ENCODE measurements at regions of chr3 and their contacts with region 1.

Region 1: GRCh38 chr3:152458376-152459117 is 189.8 kb downstream of the MBNL1 start:
- DNase-seq: no peak
- H3K4me3 Mint-ChIP-seq: peak overlapping the region; percentile 26
- H3K27ac Mint-ChIP-seq: peak overlapping the region; percentile 39
- H3K4me1 Mint-ChIP-seq: peaks cover 31% of the 10 kb centered on the region
- H3K27me3 Mint-ChIP-seq: no peaks in the 10 kb centered on the region

Region 2: GRCh38 chr3:152084441-152085158 is 373.9 kb before region 1 on chr3:
- intact Hi-C with region 1: loop called (anchors 5 kb)
- DNase-seq: no peak
- H3K4me3 Mint-ChIP-seq: no peak overlapping the region
- H3K27ac Mint-ChIP-seq: no peak overlapping the region
- H3K4me1 Mint-ChIP-seq: no peaks in the 10 kb centered on the region
- H3K27me3 Mint-ChIP-seq: peaks cover 5% of the 10 kb centered on the region

Region 3: GRCh38 chr3:152356870-152357276 is 101.7 kb before region 1 on chr3:
- intact Hi-C with region 1: no loop called
- DNase-seq: no peak
- H3K4me3 Mint-ChIP-seq: no peak overlapping the region
- H3K27ac Mint-ChIP-seq: peak overlapping the region; percentile 15
- H3K4me1 Mint-ChIP-seq: peaks cover 56% of the 10 kb centered on the region
- H3K27me3 Mint-ChIP-seq: no peaks in the 10 kb centered on the region

Region 4: GRCh38 chr3:152444029-152444641 is 14.4 kb before region 1 on chr3:
- intact Hi-C with region 1: no loop called
- DNase-seq: no peak
- H3K4me3 Mint-ChIP-seq: no peak overlapping the region
- H3K27ac Mint-ChIP-seq: peak overlapping the region; percentile 14
- H3K4me1 Mint-ChIP-seq: peaks cover 51% of the 10 kb centered on the region
- H3K27me3 Mint-ChIP-seq: no peaks in the 10 kb centered on the region

Region 5: GRCh38 chr3:153257673-153258351 is 799.3 kb after region 1 on chr3:
- intact Hi-C with region 1: no loop called
- DNase-seq: no peak
- H3K4me3 Mint-ChIP-seq: no peak overlapping the region
- H3K27ac Mint-ChIP-seq: no peak overlapping the region
- H3K4me1 Mint-ChIP-seq: peaks cover 6% of the 10 kb centered on the region
- H3K27me3 Mint-ChIP-seq: no peaks in the 10 kb centered on the region